Prostate gland (tissue), 2 donors: ENCODE measurements at regions of chr10 and their contacts with region 1.

Region 1: GRCh38 chr10:42552493-42553407 is 85.6 kb downstream of the ZNF33B start:
- DNase-seq: peak; percentile 98
- H3K4me3 ChIP-seq: peak overlapping the region; percentile 62 to 68
- H3K27ac ChIP-seq: peak overlapping the region; percentile 61 to 72
- H3K4me1 ChIP-seq: peaks cover 4% of the 10 kb centered on the region
- H3K27me3 ChIP-seq: no peaks in the 10 kb centered on the region
- CTCF ChIP-seq: no peak
- POLR2A ChIP-seq: peak; percentile 61

Region 2: GRCh38 chr10:42367532-42368230 is 185.1 kb before region 1 on chr10:
- intact Hi-C with region 1: loop called (anchors 10 kb)
- DNase-seq: peak; percentile 78
- H3K4me3 ChIP-seq: peak overlapping the region; percentile 40 to 42
- H3K27ac ChIP-seq: no peak overlapping the region
- H3K4me1 ChIP-seq: no peaks in the 10 kb centered on the region
- H3K27me3 ChIP-seq: no peaks in the 10 kb centered on the region
- CTCF ChIP-seq: no peak
- POLR2A ChIP-seq: no peak

Region 3: GRCh38 chr10:42638055-42638820 is 85.5 kb after region 1 on chr10 and contains the start of gene ZNF33B:
- intact Hi-C with region 1: loop called (anchors 10 kb)
- DNase-seq: peak; percentile 97
- H3K4me3 ChIP-seq: peak within 1 kb of the TSS; percentile 68 to 71
- H3K27ac ChIP-seq: peak within 1 kb of the TSS; percentile 95 to 96
- H3K4me1 ChIP-seq: no peaks in the 10 kb centered on the region
- H3K27me3 ChIP-seq: no peaks in the 10 kb centered on the region
- CTCF ChIP-seq: peak in 1 of 4 experiments; percentile 7
- POLR2A ChIP-seq: peak; percentile 73
- total RNA-seq, gene ZNF33B: 25.6 to 32.6 TPM

Region 4: GRCh38 chr10:42782446-42783180 is 229.9 kb after region 1 on chr10 and contains the start of gene BMS1:
- intact Hi-C with region 1: loop called (anchors 10 kb)
- DNase-seq: peak; percentile 88
- H3K4me3 ChIP-seq: peak within 1 kb of the TSS; percentile 57 to 61
- H3K27ac ChIP-seq: peak within 1 kb of the TSS; percentile 91 to 93
- H3K4me1 ChIP-seq: no peaks in the 10 kb centered on the region
- H3K27me3 ChIP-seq: no peaks in the 10 kb centered on the region
- CTCF ChIP-seq: no peak
- POLR2A ChIP-seq: peak; percentile 69
- total RNA-seq, gene BMS1: 10.2 to 18.2 TPM